Caco-2 (cell line): ENCODE measurements at regions of chr2 and their contacts with region 1.

Region 1: GRCh38 chr2:85017411-85018048 is 46.6 kb downstream of the KCMF1 start:
- DNase-seq: no peak
- H3K4me3 ChIP-seq: no peak overlapping the region
- H3K4me3 Mint-ChIP-seq: no peak overlapping the region
- H3K27ac Mint-ChIP-seq: no peak overlapping the region
- H3K4me1 ChIP-seq: peaks cover 8% of the 10 kb centered on the region
- H3K4me1 Mint-ChIP-seq: peaks cover 20% of the 10 kb centered on the region
- H3K27me3 ChIP-seq: no peaks in the 10 kb centered on the region
- H3K27me3 Mint-ChIP-seq: no peaks in the 10 kb centered on the region
- CTCF ChIP-seq: peak in 1 of 2 experiments; percentile 10

Region 2: GRCh38 chr2:84958135-84959044 is 59.1 kb before region 1 on chr2:
- CTCF ChIA-PET with region 1: no interaction called
- POLR2A ChIA-PET with region 1: no interaction called
- intact Hi-C with region 1: loop called (anchors 2 kb)
- DNase-seq: peak; percentile 78 to 90
- H3K4me3 ChIP-seq: no peak overlapping the region
- H3K4me3 Mint-ChIP-seq: peak overlapping the region; percentile 61
- H3K27ac Mint-ChIP-seq: peak overlapping the region; percentile 95
- H3K4me1 ChIP-seq: peaks cover 40% of the 10 kb centered on the region
- H3K4me1 Mint-ChIP-seq: peaks cover 25% of the 10 kb centered on the region
- H3K27me3 ChIP-seq: no peaks in the 10 kb centered on the region
- H3K27me3 Mint-ChIP-seq: no peaks in the 10 kb centered on the region
- CTCF ChIP-seq: no peak

Region 3: DNA sequence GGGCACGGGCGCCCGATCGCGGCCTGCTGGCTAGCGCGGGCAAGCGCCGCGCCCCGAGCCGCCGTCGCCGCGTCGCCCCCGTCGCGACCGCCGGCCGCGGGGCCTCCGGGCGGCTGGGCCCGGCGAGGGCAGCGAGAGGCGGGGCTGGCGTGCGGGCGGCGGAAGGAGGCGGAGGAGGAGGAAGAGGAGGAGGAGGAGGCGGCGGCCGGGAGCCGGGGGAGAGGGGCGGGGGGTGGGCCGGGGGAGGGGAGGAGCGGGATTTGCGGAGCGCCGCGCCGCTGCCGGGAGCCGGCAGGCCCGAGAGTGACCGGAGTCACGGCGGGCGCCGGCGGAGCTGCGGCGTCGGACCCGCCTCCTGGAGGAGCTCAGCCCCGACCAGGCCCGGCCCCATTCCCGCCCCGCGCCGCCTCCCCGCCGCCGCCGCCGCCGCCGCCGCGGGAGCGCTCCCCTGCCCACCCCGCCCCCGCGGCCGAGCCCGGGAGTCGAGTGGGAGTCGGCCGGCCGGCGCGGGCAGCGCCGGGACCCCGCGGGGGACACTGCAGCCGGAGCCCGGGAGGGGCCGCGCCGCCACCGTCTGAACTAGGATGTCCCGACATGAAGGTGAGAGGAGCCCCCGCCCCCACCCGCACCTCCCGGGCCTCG is 46.5 kb before region 1 on chr2 and contains the start of gene KCMF1:
- CTCF ChIA-PET with region 1: interaction called, 3 read pairs
- POLR2A ChIA-PET with region 1: no interaction called
- intact Hi-C with region 1: loop called (anchors 2 kb)
- DNase-seq: peak; percentile 85 to 86
- H3K4me3 ChIP-seq: peak within 1 kb of the TSS; percentile 95
- H3K4me3 Mint-ChIP-seq: peak within 1 kb of the TSS; percentile 95
- H3K27ac Mint-ChIP-seq: peak within 1 kb of the TSS; percentile 98
- H3K4me1 ChIP-seq: peaks cover 27% of the 10 kb centered on the region
- H3K4me1 Mint-ChIP-seq: peaks cover 7% of the 10 kb centered on the region
- H3K27me3 ChIP-seq: no peaks in the 10 kb centered on the region
- H3K27me3 Mint-ChIP-seq: no peaks in the 10 kb centered on the region
- CTCF ChIP-seq: no peak
- total RNA-seq, gene KCMF1: 81.5 and 83.4 TPM in 2 replicates